ENCODE measurements at regions of chr15 and their contacts with region 1.

Region 1: DNA sequence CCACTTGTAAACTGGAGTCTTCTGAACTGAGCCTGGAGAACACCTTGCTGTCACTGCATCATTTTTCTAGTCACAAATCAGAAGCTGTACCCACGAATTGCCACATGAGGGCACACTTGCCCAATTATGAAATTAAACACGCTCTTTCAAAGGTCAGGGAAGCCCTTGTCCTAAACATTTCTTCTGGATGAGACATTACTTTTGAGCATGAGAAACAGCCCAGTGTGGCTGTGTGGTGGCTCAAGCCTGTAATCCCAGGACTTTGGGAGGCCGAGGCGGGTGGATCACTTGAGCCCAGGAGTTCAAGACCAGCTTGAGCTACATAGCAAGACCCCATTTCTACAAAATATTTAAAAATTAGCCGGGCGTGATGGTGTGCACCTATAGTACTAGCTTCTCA is 27.5 kb upstream of the CFAP161 start:
- DNase-seq: peak; percentile 79
- H3K4me3 ChIP-seq: no peak overlapping the region
- H3K27ac ChIP-seq: no peak overlapping the region
- H3K27me3 ChIP-seq: peaks cover 6% of the 10 kb centered on the region
- CTCF ChIP-seq: peak; percentile 77

Region 2: DNA sequence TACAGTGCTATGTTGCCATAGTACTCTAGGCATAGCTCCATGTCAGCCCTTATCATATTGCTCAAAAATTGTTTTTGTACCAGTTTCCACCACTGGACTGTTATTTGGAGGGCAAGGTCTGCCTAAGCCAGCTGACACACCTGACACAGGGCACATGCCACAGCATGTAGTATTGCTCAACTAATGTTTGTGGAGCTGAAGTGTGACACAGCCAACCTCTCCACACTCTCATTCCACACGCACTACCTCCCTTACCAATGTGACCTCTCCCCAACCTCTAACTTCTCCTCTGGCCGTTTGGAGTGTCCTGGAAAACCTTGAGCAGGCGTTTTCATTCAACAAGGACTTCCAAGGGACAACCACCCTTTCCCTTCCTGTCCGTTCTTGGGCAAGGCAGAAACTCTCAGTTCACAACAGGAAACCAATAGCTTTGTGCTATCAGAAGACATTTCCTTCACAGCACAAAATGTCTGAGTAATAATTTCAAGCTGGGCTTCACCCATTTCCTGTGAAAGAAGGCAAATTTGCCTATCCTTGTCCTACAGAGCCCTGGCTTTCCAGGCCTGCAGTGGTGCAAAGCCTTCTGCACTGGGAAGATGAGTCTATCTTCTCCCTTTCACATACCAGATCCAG is 67.5 kb before region 1 on chr15:
- in situ Hi-C with region 1: no loop called
- DNase-seq: no peak
- H3K4me3 ChIP-seq: no peak overlapping the region
- H3K27ac ChIP-seq: no peak overlapping the region
- H3K27me3 ChIP-seq: no peaks in the 10 kb centered on the region
- CTCF ChIP-seq: no peak

Region 3: DNA sequence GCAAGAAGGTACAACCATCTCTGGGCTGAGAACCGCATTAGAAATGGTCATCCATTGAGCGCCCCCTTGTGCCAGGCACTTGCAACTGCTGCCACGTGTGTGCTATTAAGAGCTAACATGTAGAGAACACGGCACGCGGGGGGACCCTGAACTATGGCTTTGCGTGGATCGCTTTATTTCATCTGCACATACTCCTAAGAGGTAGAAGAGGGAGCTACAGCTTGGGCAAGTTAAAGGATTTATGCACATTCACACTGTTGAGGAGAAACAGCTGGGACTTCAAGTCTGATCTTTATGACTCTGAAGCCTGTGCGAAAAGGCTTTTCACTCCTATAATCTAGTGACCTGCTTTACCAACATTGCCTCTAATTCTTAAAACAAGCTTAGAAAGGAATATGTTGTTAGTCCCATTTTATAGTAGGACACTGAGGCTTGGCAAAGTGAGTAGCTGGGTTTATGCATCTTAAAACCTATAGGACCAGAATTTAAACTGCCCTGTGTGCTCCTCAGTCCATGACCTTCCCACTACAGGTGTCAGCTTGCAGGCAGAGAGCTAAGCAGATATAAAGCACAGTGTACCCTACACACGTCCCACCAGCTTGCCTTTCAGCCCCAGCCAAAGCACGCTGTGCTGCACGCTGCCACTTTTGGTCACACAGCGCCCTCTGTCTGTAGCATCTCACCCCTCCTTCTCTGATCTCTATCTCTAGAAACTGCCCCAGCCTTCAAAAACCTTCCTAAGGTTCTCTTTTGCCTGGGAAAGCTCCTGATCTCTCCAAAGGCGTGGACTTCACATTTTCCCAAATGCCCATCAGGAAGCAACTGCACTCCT is 159.6 kb after region 1 on chr15:
- in situ Hi-C with region 1: loop called (anchors 25 kb)
- DNase-seq: peak; percentile 71
- H3K4me3 ChIP-seq: peak overlapping the region; percentile 24
- H3K27ac ChIP-seq: no peak overlapping the region
- H3K27me3 ChIP-seq: no peaks in the 10 kb centered on the region
- CTCF ChIP-seq: peak; percentile 95

Measured in brain microvascular endothelial cell (primary cell).